ENCODE measurements at regions of chr1 and their contacts with region 1.

Region 1: GRCh38 chr1:223748773-223749733 is 36.7 kb downstream of the CAPN2 start:
- DNase-seq: peak; percentile 54
- H3K4me3 Mint-ChIP-seq: no peak overlapping the region
- H3K27ac Mint-ChIP-seq: peak overlapping the region; percentile 32
- H3K4me1 Mint-ChIP-seq: peaks cover 12% of the 10 kb centered on the region
- H3K27me3 Mint-ChIP-seq: no peaks in the 10 kb centered on the region
- CTCF ChIP-seq: peak; percentile 99

Region 2: GRCh38 chr1:223233410-223234169 is 515.5 kb before region 1 on chr1:
- CTCF ChIA-PET with region 1: no interaction called
- POLR2A ChIA-PET with region 1: no interaction called
- intact Hi-C with region 1: no loop called
- DNase-seq: peak; percentile 95
- H3K4me3 Mint-ChIP-seq: peak overlapping the region; percentile 26
- H3K27ac Mint-ChIP-seq: peak overlapping the region; percentile 33
- H3K4me1 Mint-ChIP-seq: peaks cover 48% of the 10 kb centered on the region
- H3K27me3 Mint-ChIP-seq: no peaks in the 10 kb centered on the region
- CTCF ChIP-seq: no peak

Region 3: GRCh38 chr1:223538981-223539380 is 210.1 kb before region 1 on chr1:
- CTCF ChIA-PET with region 1: no interaction called
- POLR2A ChIA-PET with region 1: no interaction called
- intact Hi-C with region 1: no loop called
- DNase-seq: no peak
- H3K4me3 Mint-ChIP-seq: no peak overlapping the region
- H3K27ac Mint-ChIP-seq: no peak overlapping the region
- H3K4me1 Mint-ChIP-seq: no peaks in the 10 kb centered on the region
- H3K27me3 Mint-ChIP-seq: peaks cover 14% of the 10 kb centered on the region
- CTCF ChIP-seq: no peak

Region 4: DNA sequence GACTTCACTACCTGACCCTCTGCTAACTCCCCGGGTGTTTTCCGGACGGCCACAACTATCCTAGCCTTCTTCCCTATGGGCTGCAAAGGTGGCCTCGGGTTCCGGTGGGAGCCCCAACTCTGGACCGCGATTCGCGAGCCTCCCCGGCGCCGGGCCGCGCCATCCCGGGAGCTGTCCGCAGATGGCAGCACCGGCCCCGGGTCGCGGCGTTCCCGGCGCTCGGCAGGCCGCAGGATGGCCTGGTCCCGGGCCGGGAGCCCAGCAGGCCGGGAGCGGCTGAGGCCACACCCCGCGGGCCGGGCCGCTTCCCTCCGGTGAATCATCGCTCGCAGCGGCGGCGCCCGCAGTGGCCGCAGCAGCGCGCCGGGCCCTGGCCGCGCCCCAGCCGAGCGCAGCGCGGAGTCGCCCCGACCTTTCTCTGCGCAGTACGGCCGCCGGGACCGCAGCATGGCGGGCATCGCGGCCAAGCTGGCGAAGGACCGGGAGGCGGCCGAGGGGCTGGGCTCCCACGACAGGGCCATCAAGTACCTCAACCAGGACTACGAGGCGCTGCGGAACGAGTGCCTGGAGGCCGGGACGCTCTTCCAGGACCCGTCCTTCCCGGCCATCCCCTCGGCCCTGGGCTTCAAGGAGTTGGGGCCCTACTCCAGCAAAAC is 36.7 kb before region 1 on chr1 and contains the start of gene CAPN2:
- CTCF ChIA-PET with region 1: interaction called, 64 read pairs
- POLR2A ChIA-PET with region 1: interaction called, 35 read pairs
- intact Hi-C with region 1: loop called (anchors 1 kb)
- DNase-seq: peak; percentile 94
- H3K4me3 Mint-ChIP-seq: peak within 1 kb of the TSS; percentile 77
- H3K27ac Mint-ChIP-seq: peak within 1 kb of the TSS; percentile 88
- H3K4me1 Mint-ChIP-seq: peaks cover 61% of the 10 kb centered on the region
- H3K27me3 Mint-ChIP-seq: no peaks in the 10 kb centered on the region
- CTCF ChIP-seq: peak; percentile 98
- total RNA-seq, gene CAPN2: 513 and 622 TPM in 2 replicates

Region 5: DNA sequence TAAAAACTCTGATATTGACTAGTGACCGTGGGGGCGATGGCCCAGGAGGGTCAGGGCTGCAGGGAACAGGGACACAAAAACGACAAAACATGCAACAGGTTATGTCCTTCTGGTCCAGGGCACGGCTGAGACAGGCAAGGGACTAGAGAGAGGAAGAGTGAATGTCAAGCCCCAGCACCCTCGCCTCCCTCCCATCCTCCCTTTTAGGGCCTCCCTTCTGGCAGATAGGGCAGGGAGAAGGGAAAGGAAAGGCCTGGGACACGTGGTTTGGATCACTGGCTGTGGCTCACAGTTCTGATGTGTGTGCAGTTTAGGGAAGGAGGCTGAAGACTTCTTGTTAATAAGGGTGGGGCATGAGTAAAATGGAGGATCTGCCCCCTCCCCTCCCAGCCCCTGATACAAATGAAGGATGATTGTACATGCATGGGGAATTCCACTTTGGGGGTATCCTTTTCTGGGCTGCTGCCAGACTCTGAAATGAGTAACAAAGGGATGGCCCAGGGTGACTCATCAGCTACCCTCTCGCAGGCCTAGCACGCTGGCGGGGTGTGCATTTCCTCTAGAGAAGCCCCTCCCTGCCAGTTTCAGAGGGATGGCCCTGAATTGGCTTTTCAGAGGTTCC is 22.6 kb before region 1 on chr1:
- CTCF ChIA-PET with region 1: interaction called, 30 read pairs
- POLR2A ChIA-PET with region 1: interaction called, 4 read pairs
- intact Hi-C with region 1: no loop called
- DNase-seq: peak; percentile 100
- H3K4me3 Mint-ChIP-seq: peak overlapping the region; percentile 32
- H3K27ac Mint-ChIP-seq: peak overlapping the region; percentile 90
- H3K4me1 Mint-ChIP-seq: peaks cover 66% of the 10 kb centered on the region
- H3K27me3 Mint-ChIP-seq: no peaks in the 10 kb centered on the region
- CTCF ChIP-seq: no peak

Region 6: DNA sequence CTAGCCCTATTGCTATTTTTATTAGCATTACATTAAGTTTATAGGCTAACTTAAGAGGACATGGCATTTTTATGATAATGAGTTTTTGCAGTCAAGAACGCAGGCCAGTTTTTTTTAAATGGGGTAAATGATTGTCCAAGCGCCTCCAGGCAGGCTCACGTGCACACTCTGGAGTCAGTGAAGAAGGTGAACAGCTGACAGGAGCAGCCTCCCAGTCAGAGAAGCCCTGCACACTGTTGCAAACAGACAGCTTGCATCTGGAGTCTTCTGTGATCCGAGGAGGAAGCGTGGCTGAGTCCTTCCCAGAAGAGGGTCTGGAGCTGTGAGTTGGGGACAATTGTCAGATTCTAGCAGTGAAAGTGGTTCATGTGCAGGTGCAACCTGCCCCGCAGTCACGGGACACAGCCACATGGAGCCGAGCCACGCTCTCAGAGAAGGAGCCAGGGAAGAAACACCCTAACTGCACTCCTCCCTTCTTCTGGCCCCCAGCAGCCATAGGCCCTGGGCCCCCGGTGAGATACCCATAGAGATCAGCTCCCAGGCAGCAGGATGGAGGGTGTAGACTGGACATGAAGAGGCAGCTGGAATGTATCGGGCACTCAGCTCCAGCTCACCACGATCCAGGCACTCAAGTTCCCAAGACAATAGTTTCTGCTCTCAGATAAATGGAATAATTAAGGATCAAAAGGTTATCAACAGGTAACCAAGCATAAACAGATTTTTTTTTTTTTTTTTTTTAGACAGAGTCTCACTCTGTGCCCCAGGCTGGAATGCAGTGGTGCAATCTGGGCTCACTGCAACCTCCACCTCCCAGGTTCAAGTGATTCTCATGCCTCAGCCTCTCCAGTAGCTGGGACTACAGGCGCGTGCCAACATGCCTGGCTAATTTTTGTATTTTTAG is 10.3 kb before region 1 on chr1:
- CTCF ChIA-PET with region 1: interaction called, 70 read pairs
- POLR2A ChIA-PET with region 1: interaction called, 8 read pairs
- intact Hi-C with region 1: no loop called
- DNase-seq: peak; percentile 72
- H3K4me3 Mint-ChIP-seq: no peak overlapping the region
- H3K27ac Mint-ChIP-seq: peak overlapping the region; percentile 82
- H3K4me1 Mint-ChIP-seq: peaks cover 42% of the 10 kb centered on the region
- H3K27me3 Mint-ChIP-seq: no peaks in the 10 kb centered on the region
- CTCF ChIP-seq: no peak

Region 7: GRCh38 chr1:223771814-223772770 is 23.0 kb after region 1 on chr1:
- CTCF ChIA-PET with region 1: interaction called, 41 read pairs
- POLR2A ChIA-PET with region 1: interaction called, 8 read pairs
- intact Hi-C with region 1: no loop called
- DNase-seq: peak; percentile 82
- H3K4me3 Mint-ChIP-seq: peak overlapping the region; percentile 52
- H3K27ac Mint-ChIP-seq: peak overlapping the region; percentile 92
- H3K4me1 Mint-ChIP-seq: peaks cover 69% of the 10 kb centered on the region
- H3K27me3 Mint-ChIP-seq: no peaks in the 10 kb centered on the region
- CTCF ChIP-seq: no peak

Region 8: DNA sequence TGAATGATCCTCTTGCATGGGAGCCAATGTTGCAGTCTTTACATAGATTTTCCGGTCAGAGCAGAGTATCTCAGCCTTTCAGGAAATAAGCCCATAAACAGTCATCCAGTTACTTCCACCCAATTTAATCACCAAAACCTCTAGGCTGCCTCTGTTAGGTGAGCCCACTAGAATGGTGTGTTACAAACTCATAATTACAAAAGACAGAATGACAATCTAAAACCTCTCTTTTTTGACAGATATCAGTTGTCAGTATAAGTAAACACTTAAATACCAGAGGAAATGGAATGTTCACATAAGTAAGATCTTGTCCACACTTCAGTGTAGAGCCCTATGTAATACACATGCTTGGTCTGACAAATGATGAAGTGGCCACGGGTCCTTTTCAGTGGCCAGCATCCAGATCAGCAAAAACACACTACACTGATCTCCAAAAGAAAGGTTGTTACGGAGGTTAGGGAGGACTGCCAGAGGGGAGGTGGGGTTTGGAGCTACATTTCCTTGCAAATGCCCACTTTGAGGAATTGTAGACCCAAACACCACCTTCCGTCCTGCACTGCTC is 293.6 kb after region 1 on chr1:
- CTCF ChIA-PET with region 1: no interaction called
- POLR2A ChIA-PET with region 1: no interaction called
- intact Hi-C with region 1: no loop called
- DNase-seq: no peak
- H3K4me3 Mint-ChIP-seq: no peak overlapping the region
- H3K27ac Mint-ChIP-seq: no peak overlapping the region
- H3K4me1 Mint-ChIP-seq: no peaks in the 10 kb centered on the region
- H3K27me3 Mint-ChIP-seq: peaks cover 11% of the 10 kb centered on the region
- CTCF ChIP-seq: no peak

Measured in MCF 10A (cell line).